ENCODE measurements at regions of chr18 and their contacts with region 1.

Region 1: GRCh38 chr18:47829831-47830230 is 100.6 kb downstream of the SMAD2 start:
- DNase-seq: no peak
- ATAC-seq: no peak
- H3K4me3 ChIP-seq: no peak overlapping the region
- H3K4me3 Mint-ChIP-seq: no peak overlapping the region
- H3K27ac ChIP-seq: no peak overlapping the region
- H3K27ac Mint-ChIP-seq: no peak overlapping the region
- H3K4me1 ChIP-seq: peaks cover 0 to 2% of the 10 kb centered on the region in 2 experiments
- H3K4me1 Mint-ChIP-seq: peaks cover 0 to 3% (median 1%) of the 10 kb centered on the region in 3 donors
- H3K27me3 ChIP-seq: no peaks in the 10 kb centered on the region
- H3K27me3 Mint-ChIP-seq: no peaks in the 10 kb centered on the region

Region 2: GRCh38 chr18:47898696-47899095 is 68.9 kb after region 1 on chr18:
- CTCF ChIA-PET with region 1: no interaction called
- POLR2A ChIA-PET with region 1: interaction called in 1 of 2 experiments, 11 read pairs
- DNase-seq: no peak
- ATAC-seq: no peak
- H3K4me3 ChIP-seq: no peak overlapping the region
- H3K4me3 Mint-ChIP-seq: no peak overlapping the region
- H3K27ac ChIP-seq: no peak overlapping the region
- H3K27ac Mint-ChIP-seq: no peak overlapping the region
- H3K4me1 ChIP-seq: peaks cover 11 to 38% of the 10 kb centered on the region in 2 experiments
- H3K4me1 Mint-ChIP-seq: peaks cover 91 to 98% (median 91%) of the 10 kb centered on the region in 3 donors
- H3K27me3 ChIP-seq: no peaks in the 10 kb centered on the region
- H3K27me3 Mint-ChIP-seq: no peaks in the 10 kb centered on the region